Panc1 (cell line): ENCODE measurements at regions of chr16 and their contacts with region 1.

Region 1: DNA sequence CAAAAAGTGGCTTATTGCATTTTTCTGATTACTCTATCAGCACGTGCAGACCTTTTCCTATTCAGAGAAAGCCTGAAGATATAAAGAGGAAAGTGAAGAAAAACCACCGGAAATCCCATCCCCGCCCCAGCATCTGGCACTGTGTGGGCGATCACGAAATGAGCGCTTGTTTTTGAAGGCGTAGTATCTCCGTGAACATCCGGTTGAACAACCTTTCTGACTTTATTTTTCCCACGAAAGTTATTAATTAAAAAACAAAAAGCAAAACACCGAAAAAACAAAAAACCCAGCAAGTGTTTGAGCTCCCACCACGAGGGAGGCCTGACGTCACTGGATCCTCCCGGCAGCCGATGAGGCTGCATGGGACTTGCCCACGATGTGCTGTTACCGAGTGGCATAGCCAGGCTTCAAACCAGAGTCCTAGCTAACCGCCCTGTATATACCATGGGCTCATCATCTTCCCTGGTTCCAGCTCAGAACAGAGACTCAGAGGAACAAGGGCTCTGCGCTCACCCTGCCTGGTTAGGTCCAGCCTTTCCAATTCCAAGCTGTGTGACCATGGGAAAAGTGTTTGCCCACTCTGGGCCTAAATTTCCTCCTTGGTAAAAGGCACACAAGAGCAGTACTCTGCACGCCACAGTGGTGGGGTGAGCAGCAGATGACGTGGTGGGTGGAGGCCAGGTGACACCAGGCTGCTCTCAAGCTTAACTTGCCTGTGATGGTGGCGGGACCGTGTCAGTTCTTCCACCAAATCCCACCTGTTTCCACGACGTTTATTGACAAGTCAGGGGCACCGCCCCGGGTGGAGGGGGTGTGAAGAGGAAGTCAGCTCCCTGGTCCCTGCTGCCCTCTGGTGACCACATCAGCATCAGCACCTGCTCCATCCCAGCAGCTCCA is 34.3 kb upstream of the IL21R start:
- DNase-seq: no peak
- ATAC-seq: peak; percentile 90
- H3K4me3 ChIP-seq: peak overlapping the region in 1 of 2 experiments; percentile 35; a peak in 2 of 4 replicates
- H3K27ac ChIP-seq: no peak overlapping the region; the same call in 1 of the 2 replicates
- H3K4me1 ChIP-seq: peaks cover 5% of the 10 kb centered on the region; the same call in 1 of the 2 replicates
- H3K27me3 ChIP-seq: no peaks in the 10 kb centered on the region
- CTCF ChIP-seq: peak; percentile 93

Region 2: DNA sequence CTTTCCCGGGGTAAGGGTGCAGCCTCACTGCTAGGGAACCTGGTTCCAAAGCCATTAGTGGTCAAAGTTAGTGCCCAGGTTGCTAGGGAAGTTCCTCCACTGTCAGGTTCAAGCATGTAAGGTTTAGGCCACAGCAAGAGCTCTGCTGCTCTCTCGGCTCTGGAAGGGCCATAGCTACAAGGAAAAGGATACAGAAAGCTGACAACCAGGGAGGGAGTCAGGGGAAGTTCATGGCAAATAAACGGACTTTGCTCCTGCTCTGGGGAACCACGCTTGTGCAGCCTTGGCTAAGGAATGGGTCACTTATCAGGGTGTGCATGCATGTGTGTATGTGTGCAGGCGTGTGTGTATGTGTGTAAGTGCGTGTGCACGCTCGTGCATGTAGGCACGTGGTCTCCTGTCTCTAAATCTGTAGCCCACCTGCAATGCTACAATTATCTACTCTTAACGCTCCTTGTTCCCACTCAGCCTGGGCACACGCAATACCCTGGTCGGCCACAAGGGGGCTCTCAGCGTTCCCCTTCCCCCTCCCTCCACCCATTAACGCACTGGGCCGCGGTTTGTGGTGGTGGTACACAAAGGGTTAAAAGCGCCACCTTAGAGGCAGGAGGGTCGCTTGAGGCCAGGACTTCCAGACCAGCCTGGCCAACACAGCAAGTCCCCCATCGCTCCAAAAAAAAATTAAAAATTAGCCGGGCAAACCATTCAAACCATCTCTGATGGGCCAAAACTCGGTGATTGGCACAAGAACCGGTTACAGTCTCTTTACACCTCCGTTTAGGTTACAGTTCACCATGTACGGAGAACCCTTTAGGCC is 212.8 kb before region 1 on chr16:
- CTCF ChIA-PET with region 1: no interaction called
- POLR2A ChIA-PET with region 1: no interaction called
- in situ Hi-C with region 1: no loop called
- intact Hi-C with region 1: loop called (anchors 2 kb)
- DNase-seq: no peak
- ATAC-seq: peak; percentile 90
- H3K4me3 ChIP-seq: peak overlapping the region in 1 of 2 experiments; percentile 30; a peak in 2 of 4 replicates
- H3K27ac ChIP-seq: no peak overlapping the region
- H3K4me1 ChIP-seq: no peaks in the 10 kb centered on the region
- H3K27me3 ChIP-seq: no peaks in the 10 kb centered on the region
- CTCF ChIP-seq: peak; percentile 98

Region 3: DNA sequence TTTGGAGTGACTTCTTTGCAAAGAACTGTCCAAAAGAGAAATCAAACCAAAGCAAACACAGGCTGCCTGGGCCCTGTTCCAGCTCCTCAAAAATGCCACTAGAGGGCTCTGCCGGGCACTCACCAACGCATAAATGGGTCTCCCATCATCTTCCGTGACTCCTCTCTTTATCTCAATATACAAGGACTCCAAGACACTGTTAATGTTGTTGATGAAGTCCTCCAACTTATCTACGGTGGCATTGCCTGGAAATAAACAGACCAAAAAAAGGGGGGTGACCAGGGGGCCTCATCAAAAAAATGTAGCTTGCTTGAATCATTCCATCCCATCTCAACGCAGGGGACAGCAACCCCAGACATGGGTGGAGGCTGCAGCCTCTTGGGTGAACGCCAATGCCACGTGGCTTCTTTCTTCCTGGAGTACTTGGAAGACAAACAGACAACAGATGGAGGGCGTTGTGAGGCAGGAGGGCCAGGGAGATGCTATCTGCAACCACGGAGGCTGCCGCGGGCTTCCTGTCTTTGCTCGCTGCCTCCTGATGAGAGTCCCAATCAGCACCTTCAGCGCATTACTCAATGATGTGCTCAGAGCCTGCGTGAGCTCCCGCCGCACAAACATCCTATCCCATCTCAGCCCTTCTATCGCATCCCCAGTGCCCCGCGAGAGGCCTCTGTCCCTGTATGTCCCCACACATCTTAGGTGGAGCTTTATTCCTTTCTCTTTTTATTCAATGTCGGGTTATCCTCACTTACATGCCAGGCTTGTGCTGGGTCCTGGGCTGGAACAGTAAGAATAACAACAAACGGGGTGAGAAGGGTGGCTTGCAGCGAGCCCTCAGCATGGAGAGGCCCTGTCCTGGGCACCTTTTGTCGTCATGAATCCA is 132.4 kb before region 1 on chr16:
- CTCF ChIA-PET with region 1: interaction called, 25 read pairs
- POLR2A ChIA-PET with region 1: interaction called, 7 read pairs
- in situ Hi-C with region 1: no loop called
- intact Hi-C with region 1: loop called (anchors 1 kb)
- DNase-seq: no peak
- ATAC-seq: peak; percentile 90
- H3K4me3 ChIP-seq: no peak overlapping the region
- H3K27ac ChIP-seq: no peak overlapping the region
- H3K4me1 ChIP-seq: no peaks in the 10 kb centered on the region
- H3K27me3 ChIP-seq: no peaks in the 10 kb centered on the region
- CTCF ChIP-seq: peak; percentile 94